Endothelial cell of umbilical vein (primary cell): ENCODE measurements at regions of chr5 and their contacts with region 1.

Region 1: DNA sequence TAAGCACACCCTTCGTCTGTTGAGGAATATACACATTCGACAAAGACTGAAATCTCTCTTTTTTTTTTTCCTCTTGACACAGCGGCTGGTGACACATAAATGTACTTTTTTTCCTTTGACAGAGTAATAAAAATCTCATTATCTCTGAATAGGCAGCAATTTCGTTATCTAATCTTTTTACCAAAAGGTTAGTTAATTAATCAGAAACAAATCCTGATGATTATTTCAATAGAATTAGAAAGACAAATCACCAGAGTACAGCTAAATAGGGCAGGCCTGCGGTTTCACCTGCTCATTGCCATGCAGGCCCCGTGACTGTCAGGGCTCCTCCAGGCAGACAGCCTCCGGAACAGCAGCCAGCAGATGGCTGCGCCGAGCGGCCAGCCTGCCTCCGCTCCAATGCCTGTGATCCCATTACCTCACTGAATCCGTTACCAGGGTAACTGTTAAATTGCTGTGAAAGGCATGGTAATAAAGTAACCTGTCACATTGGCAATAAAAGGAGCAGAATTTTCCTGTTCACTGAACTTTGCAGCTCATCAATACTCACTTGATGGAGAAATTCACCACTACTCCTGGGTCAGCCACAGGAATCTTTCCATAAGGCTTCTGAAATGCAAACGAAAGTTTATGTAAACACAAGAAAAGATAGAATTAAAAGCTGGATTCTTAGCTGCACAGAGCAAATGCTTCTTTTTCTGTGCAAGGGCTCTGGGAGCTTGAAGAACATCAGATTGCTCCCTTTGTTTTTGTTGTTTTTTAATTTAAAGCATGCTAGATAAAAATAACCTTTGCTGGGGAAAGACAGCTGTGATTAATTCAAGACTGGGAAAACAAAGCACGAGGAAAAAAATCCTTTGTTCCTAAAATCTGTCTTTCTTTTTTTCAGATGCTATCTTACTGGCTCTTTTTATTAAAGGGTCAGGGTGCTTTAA is 666.4 kb upstream of the ZNF608 start:
- DNase-seq: peak; percentile 93
- H3K4me3 ChIP-seq: no peak overlapping the region
- H3K27ac ChIP-seq: peak overlapping the region; percentile 99
- H3K4me1 ChIP-seq: peaks cover 54% of the 10 kb centered on the region
- H3K27me3 ChIP-seq: no peaks in the 10 kb centered on the region
- CTCF ChIP-seq: peak; percentile 58 to 66
- POLR2A ChIP-seq: no peak

Region 2: GRCh38 chr5:123671042-123671441 is 1741.8 kb before region 1 on chr5:
- CTCF ChIA-PET with region 1: no interaction called
- POLR2A ChIA-PET with region 1: interaction called, 4 read pairs
- dilution Hi-C with region 1: no loop called
- intact Hi-C with region 1: loop called (anchors 2 kb)
- DNase-seq: peak; percentile 68
- H3K4me3 ChIP-seq: no peak overlapping the region
- H3K27ac ChIP-seq: no peak overlapping the region
- H3K4me1 ChIP-seq: no peaks in the 10 kb centered on the region
- H3K27me3 ChIP-seq: no peaks in the 10 kb centered on the region
- CTCF ChIP-seq: peak; percentile 52 to 57
- POLR2A ChIP-seq: no peak

Region 3: GRCh38 chr5:124536333-124536732 is 876.5 kb before region 1 on chr5:
- CTCF ChIA-PET with region 1: no interaction called
- POLR2A ChIA-PET with region 1: no interaction called
- dilution Hi-C with region 1: no loop called
- intact Hi-C with region 1: loop called (anchors 1 kb)
- DNase-seq: peak; percentile 91
- H3K4me3 ChIP-seq: no peak overlapping the region
- H3K27ac ChIP-seq: peak overlapping the region; percentile 63
- H3K4me1 ChIP-seq: peaks cover 28% of the 10 kb centered on the region
- H3K27me3 ChIP-seq: no peaks in the 10 kb centered on the region
- CTCF ChIP-seq: no peak
- POLR2A ChIP-seq: no peak

Region 4: GRCh38 chr5:124902097-124902821 is 510.6 kb before region 1 on chr5:
- CTCF ChIA-PET with region 1: no interaction called
- POLR2A ChIA-PET with region 1: no interaction called
- dilution Hi-C with region 1: no loop called
- intact Hi-C with region 1: loop called (anchors 5 kb)
- DNase-seq: peak; percentile 30
- H3K4me3 ChIP-seq: no peak overlapping the region
- H3K27ac ChIP-seq: no peak overlapping the region
- H3K4me1 ChIP-seq: peaks cover 16% of the 10 kb centered on the region
- H3K27me3 ChIP-seq: no peaks in the 10 kb centered on the region
- CTCF ChIP-seq: no peak
- POLR2A ChIP-seq: no peak

Region 5: GRCh38 chr5:125093776-125094175 is 319.1 kb before region 1 on chr5:
- CTCF ChIA-PET with region 1: no interaction called
- POLR2A ChIA-PET with region 1: no interaction called
- dilution Hi-C with region 1: no loop called
- intact Hi-C with region 1: loop called (anchors 2 kb)
- DNase-seq: peak; percentile 90
- H3K4me3 ChIP-seq: no peak overlapping the region
- H3K27ac ChIP-seq: peak overlapping the region; percentile 83
- H3K4me1 ChIP-seq: peaks cover 12% of the 10 kb centered on the region
- H3K27me3 ChIP-seq: no peaks in the 10 kb centered on the region
- CTCF ChIP-seq: no peak
- POLR2A ChIP-seq: no peak

Region 6: GRCh38 chr5:125311743-125312142 is 101.1 kb before region 1 on chr5:
- CTCF ChIA-PET with region 1: no interaction called
- POLR2A ChIA-PET with region 1: no interaction called
- dilution Hi-C with region 1: no loop called
- intact Hi-C with region 1: loop called (anchors 2 kb)
- DNase-seq: peak; percentile 77
- H3K4me3 ChIP-seq: no peak overlapping the region
- H3K27ac ChIP-seq: peak overlapping the region; percentile 58
- H3K4me1 ChIP-seq: peaks cover 11% of the 10 kb centered on the region
- H3K27me3 ChIP-seq: no peaks in the 10 kb centered on the region
- CTCF ChIP-seq: no peak
- POLR2A ChIP-seq: no peak

Region 7: DNA sequence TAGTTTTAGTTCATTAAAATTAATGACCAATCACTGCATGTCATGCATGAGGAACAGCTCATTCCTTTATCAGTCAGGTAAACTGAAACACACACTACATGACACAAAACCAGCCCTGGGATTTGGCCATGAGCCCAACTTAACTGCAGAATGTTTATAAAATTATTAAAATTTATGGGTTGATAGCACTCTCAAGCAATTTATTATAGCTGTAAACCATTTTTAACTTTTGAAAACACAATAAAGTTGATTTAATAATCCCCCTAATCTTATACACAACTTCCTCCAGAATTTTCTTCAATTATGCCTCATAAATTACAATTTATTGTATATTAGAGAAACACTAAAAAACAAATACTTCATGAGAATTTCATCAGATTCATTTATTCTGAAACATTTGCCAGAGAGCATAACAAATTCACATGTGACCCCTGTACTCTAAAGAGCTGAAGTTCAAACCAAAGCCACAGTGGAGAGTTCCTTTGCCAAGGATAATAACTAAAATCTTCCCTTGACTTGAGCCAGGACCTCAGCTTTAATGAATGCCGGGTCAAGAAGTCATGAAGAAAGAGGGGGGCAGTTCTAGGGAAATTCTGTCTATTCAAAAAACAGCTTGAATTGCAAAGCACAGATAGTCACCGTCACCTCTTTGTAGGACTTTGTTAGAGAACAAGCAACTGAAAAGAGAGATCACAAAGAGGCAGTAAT is 246.6 kb after region 1 on chr5:
- CTCF ChIA-PET with region 1: no interaction called
- POLR2A ChIA-PET with region 1: interaction called, 3 read pairs
- dilution Hi-C with region 1: no loop called
- intact Hi-C with region 1: loop called (anchors 1 kb)
- DNase-seq: peak; percentile 79
- H3K4me3 ChIP-seq: peak overlapping the region in 1 of 3 experiments; percentile 21
- H3K27ac ChIP-seq: peak overlapping the region; percentile 81
- H3K4me1 ChIP-seq: peaks cover 22% of the 10 kb centered on the region
- H3K27me3 ChIP-seq: no peaks in the 10 kb centered on the region
- CTCF ChIP-seq: no peak
- POLR2A ChIP-seq: no peak